MCF 10A (cell line): ENCODE measurements at regions of chr1 and their contacts with region 1.

Region 1: GRCh38 chr1:50605186-50605875 is 182.1 kb upstream of the DMRTA2 start:
- DNase-seq: peak; percentile 70
- H3K4me3 Mint-ChIP-seq: no peak overlapping the region
- H3K27ac Mint-ChIP-seq: no peak overlapping the region
- H3K4me1 Mint-ChIP-seq: peaks cover 20% of the 10 kb centered on the region
- H3K27me3 Mint-ChIP-seq: no peaks in the 10 kb centered on the region
- CTCF ChIP-seq: peak; percentile 56

Region 2: DNA sequence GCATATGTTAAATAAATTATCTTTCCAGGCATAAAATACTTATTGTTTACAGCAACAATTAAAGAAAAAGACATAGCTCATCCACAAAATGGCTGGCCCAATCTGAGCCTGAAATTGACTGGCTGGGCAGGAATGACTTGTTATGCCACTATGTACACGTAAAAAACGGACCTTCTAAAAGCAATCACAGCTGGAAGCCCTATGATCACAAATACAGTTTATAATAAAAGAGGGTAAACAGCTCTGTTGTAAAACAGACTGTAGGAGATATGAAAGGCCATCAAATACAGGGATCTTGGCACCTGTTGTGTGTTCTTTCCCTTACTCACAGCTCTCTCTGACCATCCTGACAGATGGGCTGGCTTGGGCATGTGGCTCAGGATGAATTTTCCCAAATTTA is 111.6 kb before region 1 on chr1:
- CTCF ChIA-PET with region 1: no interaction called
- POLR2A ChIA-PET with region 1: no interaction called
- intact Hi-C with region 1: no loop called
- DNase-seq: no peak
- H3K4me3 Mint-ChIP-seq: no peak overlapping the region
- H3K27ac Mint-ChIP-seq: no peak overlapping the region
- H3K4me1 Mint-ChIP-seq: no peaks in the 10 kb centered on the region
- H3K27me3 Mint-ChIP-seq: no peaks in the 10 kb centered on the region
- CTCF ChIP-seq: no peak

Region 3: DNA sequence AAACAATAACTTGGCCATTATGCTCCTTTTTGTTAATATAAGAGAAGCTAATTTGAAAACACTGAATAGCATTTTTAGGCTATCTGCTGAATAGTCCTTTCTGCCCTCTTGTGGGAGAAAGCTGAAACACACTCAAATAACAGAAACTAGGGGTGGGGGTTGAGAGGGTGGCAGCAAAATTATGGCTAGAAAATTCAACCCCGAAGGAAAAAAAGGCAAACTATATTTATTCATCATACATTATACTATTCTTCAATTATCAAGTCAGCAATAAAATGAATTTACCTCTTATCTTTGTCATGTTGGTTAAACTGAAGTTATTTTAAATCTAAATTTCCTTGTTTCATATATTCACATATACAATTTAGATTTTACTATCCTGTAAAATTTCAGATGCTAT is 98.8 kb after region 1 on chr1:
- CTCF ChIA-PET with region 1: interaction called, 7 read pairs
- POLR2A ChIA-PET with region 1: interaction called, 14 read pairs
- intact Hi-C with region 1: no loop called
- DNase-seq: peak; percentile 66
- H3K4me3 Mint-ChIP-seq: no peak overlapping the region
- H3K27ac Mint-ChIP-seq: no peak overlapping the region
- H3K4me1 Mint-ChIP-seq: peaks cover 12% of the 10 kb centered on the region
- H3K27me3 Mint-ChIP-seq: no peaks in the 10 kb centered on the region
- CTCF ChIP-seq: peak; percentile 60

Region 4: GRCh38 chr1:51453010-51453409 is 847.7 kb after region 1 on chr1:
- CTCF ChIA-PET with region 1: no interaction called
- POLR2A ChIA-PET with region 1: no interaction called
- intact Hi-C with region 1: no loop called
- DNase-seq: no peak
- H3K4me3 Mint-ChIP-seq: no peak overlapping the region
- H3K27ac Mint-ChIP-seq: no peak overlapping the region
- H3K4me1 Mint-ChIP-seq: no peaks in the 10 kb centered on the region
- H3K27me3 Mint-ChIP-seq: no peaks in the 10 kb centered on the region
- CTCF ChIP-seq: no peak